Activated B cell treated with CpG ODN at 0.5 μM for 24 hours (primary cell): ENCODE measurements at regions of chrX and their contacts with region 1.

Region 1: DNA sequence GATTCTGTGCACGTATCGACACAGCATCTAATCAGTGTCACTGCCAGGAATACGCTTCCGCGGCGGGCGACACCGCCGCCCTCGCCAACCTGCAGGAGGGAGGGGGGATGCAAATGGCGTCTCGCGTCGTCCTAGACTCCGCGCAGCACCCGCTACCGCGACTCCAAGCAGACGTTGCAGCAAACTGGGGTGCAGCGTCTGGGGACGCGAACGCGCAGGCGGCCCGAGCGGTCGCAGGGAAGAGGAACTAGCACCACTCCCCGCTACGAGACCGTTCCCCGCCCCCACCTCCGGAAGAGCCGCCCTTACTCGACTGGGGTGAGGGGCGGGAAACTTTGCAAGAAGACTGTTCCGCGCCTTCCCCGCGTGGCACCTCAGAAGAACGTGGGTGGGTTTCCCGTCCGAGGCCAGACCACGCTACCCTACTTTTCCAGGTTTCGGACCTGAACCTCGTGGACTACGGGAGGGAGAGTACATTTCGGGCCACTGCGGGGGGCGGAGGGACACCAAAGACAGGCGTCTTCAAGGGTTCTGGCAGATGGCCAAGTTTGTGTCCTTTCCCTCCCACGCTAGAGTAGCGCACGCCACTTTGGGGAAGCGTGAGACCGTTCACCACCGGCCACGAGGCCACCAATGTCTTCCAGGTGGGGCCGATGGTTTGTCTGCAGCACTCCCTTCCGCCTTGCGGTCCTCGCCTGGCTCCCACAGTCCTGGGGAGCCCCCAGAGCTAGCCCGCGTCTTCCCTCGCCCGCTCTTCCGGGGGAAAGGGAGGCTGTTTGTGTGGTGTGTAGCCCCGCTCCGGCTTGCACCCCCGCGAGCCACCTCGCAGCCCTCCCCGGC is 78.0 kb upstream of the BCOR start:
- DNase-seq: peak; percentile 69
- ATAC-seq: peak; percentile 51
- H3K4me3 Mint-ChIP-seq: peak overlapping the region; percentile 88
- H3K27ac Mint-ChIP-seq: peak overlapping the region; percentile 98
- H3K4me1 Mint-ChIP-seq: peaks cover 53% of the 10 kb centered on the region
- H3K27me3 Mint-ChIP-seq: no peaks in the 10 kb centered on the region
- CTCF ChIP-seq: no peak

Region 2: GRCh38 chrX:39196192-39197102 is 979.3 kb before region 1 on chrX:
- CTCF ChIA-PET with region 1: no interaction called
- POLR2A ChIA-PET with region 1: no interaction called
- intact Hi-C with region 1: loop called (anchors 2 kb)
- DNase-seq: peak; percentile 16
- ATAC-seq: peak; percentile 95
- H3K4me3 Mint-ChIP-seq: peak overlapping the region; percentile 65
- H3K27ac Mint-ChIP-seq: peak overlapping the region; percentile 56
- H3K4me1 Mint-ChIP-seq: peaks cover 19% of the 10 kb centered on the region
- H3K27me3 Mint-ChIP-seq: peaks cover 7% of the 10 kb centered on the region
- CTCF ChIP-seq: no peak

Region 3: GRCh38 chrX:39859991-39860861 is 315.5 kb before region 1 on chrX:
- CTCF ChIA-PET with region 1: no interaction called
- POLR2A ChIA-PET with region 1: interaction called, 6 read pairs
- intact Hi-C with region 1: loop called (anchors 1 kb)
- DNase-seq: peak; percentile 37
- ATAC-seq: peak; percentile 53
- H3K4me3 Mint-ChIP-seq: no peak overlapping the region
- H3K27ac Mint-ChIP-seq: peak overlapping the region; percentile 50
- H3K4me1 Mint-ChIP-seq: peaks cover 33% of the 10 kb centered on the region
- H3K27me3 Mint-ChIP-seq: no peaks in the 10 kb centered on the region
- CTCF ChIP-seq: no peak

Region 4: GRCh38 chrX:40108959-40109287 is 66.8 kb before region 1 on chrX:
- CTCF ChIA-PET with region 1: no interaction called
- POLR2A ChIA-PET with region 1: interaction called, 30 read pairs
- intact Hi-C with region 1: no loop called
- DNase-seq: peak; percentile 44
- ATAC-seq: peak; percentile 29
- H3K4me3 Mint-ChIP-seq: peak overlapping the region; percentile 64
- H3K27ac Mint-ChIP-seq: no peak overlapping the region
- H3K4me1 Mint-ChIP-seq: peaks cover 18% of the 10 kb centered on the region
- H3K27me3 Mint-ChIP-seq: no peaks in the 10 kb centered on the region
- CTCF ChIP-seq: no peak

Region 5: DNA sequence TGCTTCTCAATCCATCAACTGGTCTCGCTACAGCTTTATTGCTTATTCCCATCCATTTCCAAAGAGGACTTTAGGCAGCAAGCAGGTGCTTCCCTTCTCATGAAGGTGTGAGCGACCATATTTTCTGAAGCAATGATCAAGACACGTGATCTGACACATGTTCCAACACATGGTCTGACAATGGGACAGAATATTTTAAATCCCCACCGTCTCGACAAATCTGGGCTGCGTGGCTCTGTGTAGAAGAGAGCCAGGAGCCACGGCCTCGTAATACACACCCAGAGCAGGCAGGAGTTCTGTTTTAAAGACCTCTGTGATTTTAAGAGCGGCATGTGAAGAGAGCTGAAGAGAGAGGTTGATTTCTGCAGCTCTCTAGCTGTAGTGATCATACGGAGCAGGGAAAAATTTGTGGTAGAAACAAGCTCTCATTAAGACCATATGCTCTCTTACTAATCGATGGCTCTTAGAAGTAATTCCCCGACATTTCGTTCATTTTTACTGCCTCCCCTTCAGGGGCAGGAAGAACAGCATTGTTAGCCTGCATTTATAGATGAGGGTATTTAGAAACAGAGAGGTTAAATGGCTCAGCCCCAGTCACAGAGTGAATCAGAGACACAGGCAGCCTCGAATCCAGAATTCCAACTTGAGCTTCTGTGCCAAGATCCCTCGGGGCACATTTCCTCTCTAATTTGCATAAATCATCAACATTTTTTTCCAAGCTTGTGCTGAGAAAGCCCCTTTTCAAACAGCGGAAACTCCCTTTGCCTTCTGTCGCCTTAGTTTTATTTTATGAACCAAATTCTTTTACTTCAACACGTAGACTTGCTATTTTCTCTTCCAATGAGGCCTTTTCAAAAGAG is 13.1 kb after region 1 on chrX:
- CTCF ChIA-PET with region 1: no interaction called
- POLR2A ChIA-PET with region 1: interaction called, 16 read pairs
- intact Hi-C with region 1: no loop called
- DNase-seq: no peak
- ATAC-seq: no peak
- H3K4me3 Mint-ChIP-seq: no peak overlapping the region
- H3K27ac Mint-ChIP-seq: no peak overlapping the region
- H3K4me1 Mint-ChIP-seq: peaks cover 7% of the 10 kb centered on the region
- H3K27me3 Mint-ChIP-seq: no peaks in the 10 kb centered on the region
- CTCF ChIP-seq: no peak

Region 6: DNA sequence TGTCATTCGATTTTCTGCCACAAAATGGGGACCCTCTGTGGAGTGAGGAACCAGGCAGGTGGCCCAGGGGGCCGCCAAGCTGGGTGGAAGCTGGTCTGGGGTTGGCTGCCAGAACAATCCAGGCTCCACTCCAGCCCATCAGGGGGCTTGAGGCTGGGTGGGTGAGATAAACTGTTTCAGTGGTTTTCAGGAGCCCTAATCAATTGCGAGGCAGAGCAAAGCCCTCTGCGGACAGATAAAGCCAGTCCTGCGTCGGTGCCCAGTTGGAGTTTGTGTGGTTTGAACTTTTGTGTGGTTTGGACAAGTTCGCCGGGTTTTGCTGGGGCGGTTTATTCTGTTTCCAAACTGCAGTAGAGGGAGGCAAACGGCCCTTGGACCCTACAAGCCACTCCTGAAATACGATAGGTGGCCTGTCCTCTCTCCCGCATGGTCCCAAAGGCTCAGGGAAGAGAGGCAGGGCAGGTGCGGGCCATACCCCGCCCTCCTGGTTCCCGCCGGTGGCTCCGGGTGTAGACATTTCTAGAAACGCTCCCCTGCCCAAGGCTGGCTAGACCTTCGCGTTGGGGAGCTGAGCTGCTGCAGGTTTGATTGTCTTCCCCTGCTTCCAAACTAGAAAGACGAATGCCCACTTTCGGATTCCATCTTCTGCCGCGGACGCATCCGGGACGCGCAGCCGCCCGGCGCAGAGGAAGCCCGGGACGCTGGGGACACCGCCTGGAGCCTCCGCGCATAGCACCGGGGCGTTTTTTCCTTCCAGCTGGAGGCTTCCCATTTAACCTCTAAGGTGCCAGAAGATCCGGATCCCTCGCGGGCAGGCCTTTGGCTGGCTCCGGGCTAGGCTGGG is 91.0 kb after region 1 on chrX:
- CTCF ChIA-PET with region 1: interaction called, 5 read pairs
- POLR2A ChIA-PET with region 1: interaction called, 4 read pairs
- intact Hi-C with region 1: loop called (anchors 1 kb)
- DNase-seq: peak; percentile 12
- ATAC-seq: peak; percentile 45
- H3K4me3 Mint-ChIP-seq: peak overlapping the region; percentile 72
- H3K27ac Mint-ChIP-seq: no peak overlapping the region
- H3K4me1 Mint-ChIP-seq: peaks cover 14% of the 10 kb centered on the region
- H3K27me3 Mint-ChIP-seq: no peaks in the 10 kb centered on the region
- CTCF ChIP-seq: no peak

Region 7: GRCh38 chrX:40468033-40468846 is 292.5 kb after region 1 on chrX:
- CTCF ChIA-PET with region 1: interaction called, 3 read pairs
- POLR2A ChIA-PET with region 1: interaction called, 13 read pairs
- intact Hi-C with region 1: loop called (anchors 5 kb)
- DNase-seq: no peak
- ATAC-seq: peak; percentile 66
- H3K4me3 Mint-ChIP-seq: no peak overlapping the region
- H3K27ac Mint-ChIP-seq: no peak overlapping the region
- H3K4me1 Mint-ChIP-seq: peaks cover 23% of the 10 kb centered on the region
- H3K27me3 Mint-ChIP-seq: peaks cover 12% of the 10 kb centered on the region
- CTCF ChIP-seq: no peak